Transverse colon (tissue), 4 donors: ENCODE measurements at regions of chr13 and their contacts with region 1.

Region 1: DNA sequence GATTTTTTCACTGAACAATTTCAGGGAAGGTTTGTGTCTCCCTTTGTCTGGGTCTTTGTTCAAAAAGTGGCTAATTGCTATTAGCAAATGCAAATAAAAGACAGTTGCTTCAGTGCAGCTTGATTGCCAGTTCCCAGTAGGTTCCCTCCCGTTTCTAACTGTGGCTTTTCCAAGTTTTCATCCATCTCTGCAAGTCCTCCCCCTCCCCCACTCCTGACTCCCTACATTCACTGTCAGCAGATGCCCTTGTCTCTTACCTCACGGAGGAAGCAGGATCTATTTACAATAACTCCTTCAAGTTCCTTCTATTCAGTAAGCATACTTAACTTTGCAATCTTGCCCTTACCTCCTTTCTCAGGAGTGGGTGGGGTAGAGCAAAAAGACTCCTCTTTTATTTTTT is 55.4 kb upstream of the SCEL start:
- DNase-seq: no peak
- H3K4me3 ChIP-seq: no peak overlapping the region
- H3K27ac ChIP-seq: no peak overlapping the region
- H3K4me1 ChIP-seq: peaks cover 0 to 4% (median 0%) of the 10 kb centered on the region in 4 donors
- H3K27me3 ChIP-seq: no peaks in the 10 kb centered on the region
- CTCF ChIP-seq: no peak
- EP300 ChIP-seq: no peak
- POLR2A ChIP-seq: no peak

Region 2: DNA sequence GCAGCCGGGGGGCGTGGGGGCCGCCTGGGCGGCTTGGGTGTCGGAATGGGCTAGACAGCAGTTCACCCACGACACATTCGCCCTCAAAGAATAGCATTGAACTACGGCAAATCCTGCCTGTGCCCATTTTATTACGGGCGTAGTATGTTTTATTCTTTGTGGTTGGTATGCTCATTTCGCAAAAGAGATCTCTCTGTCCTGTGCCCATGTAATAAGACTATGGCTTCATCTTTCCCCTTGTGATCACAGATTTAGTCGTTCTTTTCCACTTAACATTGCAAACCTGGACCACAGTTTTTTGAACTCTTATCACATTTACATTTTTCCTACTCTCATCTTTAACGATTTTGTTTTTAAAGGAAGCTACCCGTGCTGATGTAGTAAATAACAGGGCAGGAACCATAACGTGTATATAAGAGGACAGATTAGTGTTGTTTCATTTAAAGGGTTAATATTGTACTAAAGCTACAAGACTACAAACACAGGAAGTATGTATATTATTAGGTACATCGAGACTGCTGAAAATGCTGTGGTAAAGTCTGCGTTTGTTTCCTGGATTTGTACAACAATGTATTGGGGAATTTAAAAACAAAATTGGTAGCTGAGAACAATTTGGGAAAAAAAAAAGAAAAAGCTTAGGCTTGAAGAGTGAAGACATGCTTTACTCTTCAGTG is 150.0 kb before region 1 on chr13:
- in situ Hi-C with region 1: no loop called
- intact Hi-C with region 1: loop called (anchors 5 kb)
- DNase-seq: no peak
- H3K4me3 ChIP-seq: peak overlapping the region; percentile 26 to 75 (median 64)
- H3K27ac ChIP-seq: peak overlapping the region; percentile 88 to 91 (median 90)
- H3K4me1 ChIP-seq: peaks cover 7 to 21% (median 13%) of the 10 kb centered on the region in 4 donors
- H3K27me3 ChIP-seq: no peaks in the 10 kb centered on the region
- CTCF ChIP-seq: no peak
- EP300 ChIP-seq: no peak
- POLR2A ChIP-seq: no peak

Region 3: GRCh38 chr13:77492982-77493381 is 12.9 kb after region 1 on chr13:
- in situ Hi-C with region 1: no loop called
- intact Hi-C with region 1: loop called (anchors 1 kb)
- DNase-seq: no peak
- H3K4me3 ChIP-seq: no peak overlapping the region
- H3K27ac ChIP-seq: no peak overlapping the region
- H3K4me1 ChIP-seq: no peaks in the 10 kb centered on the region
- H3K27me3 ChIP-seq: no peaks in the 10 kb centered on the region
- CTCF ChIP-seq: peak in 2 of 5 experiments; percentile 11 to 14
- EP300 ChIP-seq: no peak
- POLR2A ChIP-seq: no peak